GM12878 (cell line): ENCODE measurements at regions of chr20 and their contacts with region 1.

Region 1: DNA sequence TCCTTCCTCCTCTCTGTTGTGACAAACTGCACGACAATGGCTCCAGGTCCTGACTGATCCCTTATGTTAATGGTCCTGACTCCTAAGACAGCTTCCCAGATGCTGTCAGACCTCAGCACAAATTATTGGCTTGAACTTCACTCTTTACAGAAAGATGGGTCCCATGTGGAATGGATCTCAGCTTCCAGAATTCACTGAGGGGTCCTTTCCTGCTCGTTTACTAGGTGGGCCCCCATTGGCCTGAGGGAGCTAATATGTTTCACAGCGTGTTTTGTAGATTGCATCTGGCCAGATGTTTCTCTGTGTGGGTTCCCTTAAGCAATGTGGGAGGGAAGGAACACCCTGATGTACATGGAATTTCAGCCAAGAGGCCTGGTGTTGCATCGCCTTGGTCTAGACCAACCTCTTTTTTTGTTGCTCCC is 826.6 kb downstream of the MAFB start:
- DNase-seq: no peak
- ATAC-seq: no peak
- H3K4me3 ChIP-seq: no peak overlapping the region
- H3K27ac ChIP-seq: no peak overlapping the region
- H3K4me1 ChIP-seq: no peaks in the 10 kb centered on the region
- H3K27me3 ChIP-seq: no peaks in the 10 kb centered on the region
- CTCF ChIP-seq: no peak
- EP300 ChIP-seq: no peak
- POLR2A ChIP-seq: no peak
- RAD21 ChIP-seq: no peak

Region 2: GRCh38 chr20:39270837-39271604 is 591.5 kb before region 1 on chr20:
- CTCF ChIA-PET with region 1: no interaction called
- POLR2A ChIA-PET with region 1: no interaction called
- RAD21 ChIA-PET with region 1: no interaction called
- SMC1A ChIA-PET with region 1: no interaction called
- in situ Hi-C with region 1: loop called (anchors 5 kb)
- intact Hi-C with region 1: no loop called
- DNase-seq: no peak
- ATAC-seq: no peak
- H3K4me3 ChIP-seq: no peak overlapping the region
- H3K27ac ChIP-seq: no peak overlapping the region
- H3K4me1 ChIP-seq: no peaks in the 10 kb centered on the region
- H3K27me3 ChIP-seq: no peaks in the 10 kb centered on the region; a peak in 1 of 4 replicates
- CTCF ChIP-seq: no peak
- EP300 ChIP-seq: no peak
- POLR2A ChIP-seq: no peak
- RAD21 ChIP-seq: no peak